ENCODE measurements at regions of chr4 and their contacts with region 1.

Region 1: GRCh38 chr4:145732895-145733880 is 53.2 kb downstream of the C4orf51 start:
- DNase-seq: peak; percentile 81
- H3K4me3 Mint-ChIP-seq: peak overlapping the region; percentile 68
- H3K27ac Mint-ChIP-seq: peak overlapping the region; percentile 67
- H3K4me1 Mint-ChIP-seq: peaks cover 18% of the 10 kb centered on the region
- H3K27me3 Mint-ChIP-seq: no peaks in the 10 kb centered on the region

Region 2: GRCh38 chr4:145785391-145786008 is 52.3 kb after region 1 on chr4:
- intact Hi-C with region 1: loop called (anchors 2 kb)
- DNase-seq: no peak
- H3K4me3 Mint-ChIP-seq: no peak overlapping the region
- H3K27ac Mint-ChIP-seq: peak overlapping the region; percentile 95
- H3K4me1 Mint-ChIP-seq: peaks cover 42% of the 10 kb centered on the region
- H3K27me3 Mint-ChIP-seq: no peaks in the 10 kb centered on the region

Region 3: DNA sequence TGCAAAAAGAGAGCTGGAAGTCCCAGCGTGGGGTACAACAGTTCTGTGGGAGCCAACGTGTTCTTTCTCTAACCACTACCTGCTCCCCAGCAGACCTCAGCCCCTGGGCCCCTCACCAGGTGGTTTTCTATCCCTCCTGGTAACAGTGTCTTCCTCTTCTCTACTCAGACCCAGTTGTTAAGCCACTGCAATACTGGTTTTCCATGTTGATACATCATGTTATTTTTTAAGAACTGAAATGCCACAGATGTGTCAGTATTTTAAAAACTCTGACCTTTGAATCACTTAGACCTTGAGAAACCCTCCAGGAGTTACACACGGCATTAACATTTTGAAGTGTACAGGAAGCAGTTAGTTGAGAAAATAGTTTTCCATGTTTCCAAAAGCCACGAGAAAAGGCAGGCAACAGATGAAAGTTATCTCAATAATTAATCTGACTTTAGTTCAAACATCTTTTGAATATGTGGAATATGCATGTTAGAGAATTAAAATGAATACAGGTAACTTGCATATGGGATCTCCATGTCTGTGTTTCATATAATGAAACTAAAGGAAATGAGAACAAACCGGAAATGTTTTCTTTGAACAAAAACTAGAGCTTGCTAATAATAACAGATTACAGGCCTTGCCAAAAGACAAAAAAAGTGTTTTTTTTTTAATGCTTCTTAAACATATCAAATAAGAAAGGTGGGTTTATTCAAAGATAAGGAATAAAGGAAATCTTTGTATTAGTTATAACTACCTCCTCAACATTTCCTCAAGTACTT is 96.6 kb after region 1 on chr4:
- intact Hi-C with region 1: loop called (anchors 1 kb)
- DNase-seq: peak; percentile 13
- H3K4me3 Mint-ChIP-seq: peak overlapping the region; percentile 62
- H3K27ac Mint-ChIP-seq: peak overlapping the region; percentile 84
- H3K4me1 Mint-ChIP-seq: peaks cover 46% of the 10 kb centered on the region
- H3K27me3 Mint-ChIP-seq: no peaks in the 10 kb centered on the region

Region 4: GRCh38 chr4:146763560-146763959 is 1030.4 kb after region 1 on chr4:
- intact Hi-C with region 1: no loop called
- DNase-seq: no peak
- H3K4me3 Mint-ChIP-seq: no peak overlapping the region
- H3K27ac Mint-ChIP-seq: no peak overlapping the region
- H3K4me1 Mint-ChIP-seq: peaks cover 3% of the 10 kb centered on the region
- H3K27me3 Mint-ChIP-seq: no peaks in the 10 kb centered on the region